ENCODE measurements at regions of chr6 and their contacts with region 1.

Region 1: GRCh38 chr6:134882426-134883038 is 67.4 kb downstream of the ALDH8A1 start:
- DNase-seq: peak; percentile 82
- H3K4me3 ChIP-seq: no peak overlapping the region
- H3K27ac ChIP-seq: no peak overlapping the region
- H3K4me1 ChIP-seq: peaks cover 9% of the 10 kb centered on the region
- H3K27me3 ChIP-seq: no peaks in the 10 kb centered on the region
- CTCF ChIP-seq: peak; percentile 96

Region 2: GRCh38 chr6:134111062-134111677 is 771.4 kb before region 1 on chr6:
- CTCF ChIA-PET with region 1: interaction called, 3 read pairs
- POLR2A ChIA-PET with region 1: interaction called, 10 read pairs
- intact Hi-C with region 1: loop called (anchors 1 kb)
- DNase-seq: peak; percentile 89
- H3K4me3 ChIP-seq: no peak overlapping the region
- H3K27ac ChIP-seq: no peak overlapping the region
- H3K4me1 ChIP-seq: no peaks in the 10 kb centered on the region
- H3K27me3 ChIP-seq: no peaks in the 10 kb centered on the region
- CTCF ChIP-seq: peak; percentile 97

Region 3: DNA sequence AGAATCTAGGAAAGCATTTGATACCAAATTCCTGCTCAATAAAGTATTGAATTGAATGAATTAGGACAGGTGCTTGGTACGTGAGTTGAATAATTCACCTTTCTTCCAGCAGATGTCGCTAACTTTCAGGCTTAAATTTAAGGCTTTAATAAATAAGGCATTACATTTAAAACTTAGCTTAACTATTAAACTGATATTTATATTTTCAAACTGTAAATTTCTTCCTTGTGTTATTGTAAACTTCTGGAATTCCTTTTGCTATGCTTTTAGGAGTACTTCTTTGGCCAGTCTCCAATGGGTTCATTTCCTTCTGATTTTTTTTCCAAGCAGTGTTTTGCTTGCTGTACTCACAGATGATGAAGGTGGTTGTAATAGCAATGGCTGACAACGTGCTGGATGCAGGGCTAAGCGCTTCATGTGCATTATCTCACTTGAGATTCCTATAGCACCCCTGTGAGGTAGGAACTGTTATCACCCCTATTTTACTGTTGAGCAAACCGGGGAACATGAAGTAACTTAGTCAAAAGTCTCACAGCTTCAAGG is 758.8 kb before region 1 on chr6:
- CTCF ChIA-PET with region 1: interaction called, 3 read pairs
- POLR2A ChIA-PET with region 1: no interaction called
- intact Hi-C with region 1: loop called (anchors 1 kb)
- DNase-seq: peak; percentile 64
- H3K4me3 ChIP-seq: no peak overlapping the region
- H3K27ac ChIP-seq: no peak overlapping the region
- H3K4me1 ChIP-seq: peaks cover 5% of the 10 kb centered on the region
- H3K27me3 ChIP-seq: no peaks in the 10 kb centered on the region
- CTCF ChIP-seq: peak; percentile 77

Region 4: DNA sequence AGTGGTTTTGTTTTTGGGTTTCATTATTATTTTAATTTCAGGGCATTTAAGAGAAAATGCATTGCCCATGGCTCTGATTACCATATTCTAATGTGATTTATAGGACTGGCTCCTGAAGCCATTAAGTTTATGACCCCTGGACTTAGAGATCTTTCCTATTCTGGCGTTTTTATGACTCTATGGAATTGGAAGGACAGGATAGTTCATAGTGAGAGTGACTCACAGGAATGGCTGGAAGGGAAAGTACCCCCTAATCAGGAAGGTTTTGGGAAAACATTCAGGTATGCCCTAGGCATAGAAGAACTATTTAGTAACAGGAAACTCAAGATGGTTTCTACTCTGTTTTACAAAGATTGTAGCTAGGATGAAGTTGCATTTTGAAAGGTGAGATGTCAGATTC is 721.5 kb before region 1 on chr6:
- CTCF ChIA-PET with region 1: interaction called, 6 read pairs
- POLR2A ChIA-PET with region 1: no interaction called
- intact Hi-C with region 1: loop called (anchors 1 kb)
- DNase-seq: no peak
- H3K4me3 ChIP-seq: no peak overlapping the region
- H3K27ac ChIP-seq: no peak overlapping the region
- H3K4me1 ChIP-seq: no peaks in the 10 kb centered on the region
- H3K27me3 ChIP-seq: no peaks in the 10 kb centered on the region
- CTCF ChIP-seq: no peak